Activated T-helper 2 cell treated with anti-CD3 and anti-CD28 coated beads, Interferon-gamma antibody, Interleukin-2, Interleukin-4, amounts not matched to agents 10 μg/mL and 5 μg/mL and 100 μg/mL, durations not matched to agents 14 hours and 24 hours and 36 hours (primary cell): ENCODE measurements at regions of chr6 and their contacts with region 1.

Region 1: GRCh38 chr6:161273752-161274487 is at the start of gene AGPAT4:
- DNase-seq: peak; percentile 74
- H3K4me3 Mint-ChIP-seq: peak within 1 kb of the TSS; percentile 90
- H3K27ac Mint-ChIP-seq: peak within 1 kb of the TSS; percentile 94
- H3K4me1 Mint-ChIP-seq: peaks cover 30% of the 10 kb centered on the region
- H3K27me3 Mint-ChIP-seq: peaks cover 10% of the 10 kb centered on the region
- total RNA-seq, gene AGPAT4: 7.3 and 7.5 TPM in 2 replicates

Region 2: GRCh38 chr6:161088676-161089328 is 185.1 kb before region 1 on chr6:
- intact Hi-C with region 1: loop called (anchors 5 kb)
- DNase-seq: no peak
- H3K4me3 Mint-ChIP-seq: no peak overlapping the region
- H3K27ac Mint-ChIP-seq: no peak overlapping the region
- H3K4me1 Mint-ChIP-seq: peaks cover 16% of the 10 kb centered on the region
- H3K27me3 Mint-ChIP-seq: no peaks in the 10 kb centered on the region

Region 3: GRCh38 chr6:161228921-161229591 is 44.9 kb before region 1 on chr6:
- intact Hi-C with region 1: loop called (anchors 1 kb)
- DNase-seq: no peak
- H3K4me3 Mint-ChIP-seq: peak overlapping the region; percentile 7
- H3K27ac Mint-ChIP-seq: peak overlapping the region; percentile 69
- H3K4me1 Mint-ChIP-seq: peaks cover 50% of the 10 kb centered on the region
- H3K27me3 Mint-ChIP-seq: no peaks in the 10 kb centered on the region

Region 4: DNA sequence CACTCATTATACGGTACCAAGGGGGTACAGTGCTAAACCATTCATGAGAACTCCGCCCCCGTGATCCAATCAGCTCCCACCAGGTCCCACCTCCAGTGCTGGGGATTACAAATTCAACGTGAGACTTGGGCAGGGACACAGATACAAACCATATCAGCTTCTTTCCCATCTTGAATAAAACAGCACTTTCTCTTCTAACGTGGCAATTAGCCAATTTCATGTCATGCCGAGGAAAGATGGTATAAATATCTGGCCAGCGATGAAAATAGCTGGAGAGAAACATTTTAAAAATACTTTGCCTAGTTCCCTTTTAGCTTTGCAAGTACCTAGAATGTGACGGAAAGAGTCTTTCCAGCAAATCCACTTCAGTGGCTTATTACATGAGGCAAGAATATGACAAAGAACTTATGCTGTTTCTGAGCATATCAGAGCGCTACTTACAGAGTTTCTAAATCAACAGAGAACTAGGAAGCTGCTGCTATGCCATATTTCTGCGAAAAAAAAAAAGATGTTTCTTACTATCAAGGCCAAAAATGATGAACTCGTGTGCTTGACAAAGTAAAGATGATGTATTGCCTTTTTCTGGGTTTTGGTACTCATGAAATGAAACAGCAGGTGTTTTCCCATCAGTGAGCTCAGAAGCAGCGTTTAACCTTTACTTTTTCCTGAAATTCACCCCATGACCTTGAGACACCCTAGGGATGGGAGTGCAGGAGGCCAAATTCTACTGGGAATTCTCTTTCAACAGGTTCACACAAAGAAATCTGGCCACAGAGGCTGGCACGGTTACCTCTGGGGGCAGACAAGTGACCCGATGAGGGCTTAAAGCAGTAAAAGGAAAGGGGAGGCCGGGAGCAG is 37.9 kb before region 1 on chr6:
- intact Hi-C with region 1: loop called (anchors 1 kb)
- DNase-seq: no peak
- H3K4me3 Mint-ChIP-seq: no peak overlapping the region
- H3K27ac Mint-ChIP-seq: peak overlapping the region; percentile 40
- H3K4me1 Mint-ChIP-seq: peaks cover 21% of the 10 kb centered on the region
- H3K27me3 Mint-ChIP-seq: no peaks in the 10 kb centered on the region

Region 5: DNA sequence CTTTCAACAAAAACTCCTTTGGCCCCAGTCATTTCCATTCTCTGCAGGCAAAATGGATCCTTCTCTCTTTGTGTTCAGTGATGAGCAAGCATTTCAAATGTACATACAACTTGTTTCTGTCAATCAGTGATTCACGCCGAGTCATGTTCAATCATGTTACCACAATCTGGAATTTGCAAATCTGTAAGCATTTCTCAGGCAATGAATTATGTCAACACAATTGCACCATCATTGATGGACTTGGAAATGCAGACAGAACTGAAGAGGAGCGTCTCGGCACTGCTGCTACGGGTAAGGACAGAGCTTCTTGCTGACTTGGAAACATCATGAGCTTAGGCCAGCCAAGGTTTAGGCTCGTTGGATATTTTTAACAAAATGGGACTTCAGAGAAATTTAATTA is 132.7 kb after region 1 on chr6:
- intact Hi-C with region 1: no loop called
- DNase-seq: no peak
- H3K4me3 Mint-ChIP-seq: no peak overlapping the region
- H3K27ac Mint-ChIP-seq: no peak overlapping the region
- H3K4me1 Mint-ChIP-seq: no peaks in the 10 kb centered on the region
- H3K27me3 Mint-ChIP-seq: peaks cover 1% of the 10 kb centered on the region